ENCODE measurements at regions of chr11 and their contacts with region 1.

Region 1: DNA sequence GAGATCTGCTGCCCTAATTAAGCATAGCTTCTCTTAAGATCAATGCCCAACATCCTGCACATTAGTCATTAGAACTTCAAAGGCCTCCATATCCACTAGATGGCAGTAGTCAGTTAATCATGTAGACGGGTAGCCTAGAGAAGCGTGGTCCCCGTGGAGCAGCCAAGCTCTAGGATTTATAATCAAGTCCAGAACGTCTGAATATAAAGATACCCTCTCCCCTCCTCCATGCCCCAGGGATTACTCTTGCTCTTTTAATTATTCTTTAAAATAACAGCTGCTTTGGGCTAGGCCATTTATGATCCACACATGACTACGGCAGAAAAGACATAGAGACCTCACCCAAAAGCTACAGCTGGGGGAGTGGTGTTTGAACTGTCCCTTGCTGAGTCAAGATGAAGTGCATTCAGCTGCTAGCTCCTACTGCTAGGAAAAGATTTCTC is 327.6 kb upstream of the PLET1 start:
- DNase-seq: peak; percentile 61 to 94
- H3K4me3 ChIP-seq: no peak overlapping the region
- H3K27ac ChIP-seq: peak overlapping the region in 2 of 5 donors; percentile 34 to 67
- H3K4me1 ChIP-seq: peaks cover 0 to 23% (median 9%) of the 10 kb centered on the region in 4 donors
- H3K27me3 ChIP-seq: no peaks in the 10 kb centered on the region
- CTCF ChIP-seq: peak in 5 of 7 experiments; percentile 27 to 65 (median 61)
- EP300 ChIP-seq: no peak
- POLR2A ChIP-seq: no peak

Region 2: GRCh38 chr11:112401036-112401769 is 187.1 kb before region 1 on chr11:
- intact Hi-C with region 1: no loop called
- DNase-seq: no peak
- H3K4me3 ChIP-seq: no peak overlapping the region
- H3K27ac ChIP-seq: no peak overlapping the region
- H3K4me1 ChIP-seq: no peaks in the 10 kb centered on the region
- H3K27me3 ChIP-seq: no peaks in the 10 kb centered on the region
- CTCF ChIP-seq: no peak
- EP300 ChIP-seq: no peak
- POLR2A ChIP-seq: no peak

Region 3: GRCh38 chr11:112724496-112724790 is 136.2 kb after region 1 on chr11:
- intact Hi-C with region 1: no loop called
- DNase-seq: peak in 1 of 2 donors; percentile 32
- H3K4me3 ChIP-seq: no peak overlapping the region
- H3K27ac ChIP-seq: no peak overlapping the region
- H3K4me1 ChIP-seq: no peaks in the 10 kb centered on the region
- H3K27me3 ChIP-seq: peaks cover 0 to 14% (median 0%) of the 10 kb centered on the region in 3 donors
- CTCF ChIP-seq: no peak
- EP300 ChIP-seq: no peak
- POLR2A ChIP-seq: no peak

Region 4: GRCh38 chr11:112886434-112887373 is 298.4 kb after region 1 on chr11:
- intact Hi-C with region 1: no loop called
- DNase-seq: peak in 1 of 2 donors; percentile 37
- H3K4me3 ChIP-seq: no peak overlapping the region
- H3K27ac ChIP-seq: no peak overlapping the region
- H3K4me1 ChIP-seq: peaks cover 0 to 16% (median 14%) of the 10 kb centered on the region in 4 donors
- H3K27me3 ChIP-seq: no peaks in the 10 kb centered on the region
- CTCF ChIP-seq: no peak
- EP300 ChIP-seq: no peak
- POLR2A ChIP-seq: no peak

Region 5: GRCh38 chr11:113106507-113106906 is 518.2 kb after region 1 on chr11:
- intact Hi-C with region 1: no loop called
- DNase-seq: no peak
- H3K4me3 ChIP-seq: no peak overlapping the region
- H3K27ac ChIP-seq: no peak overlapping the region
- H3K4me1 ChIP-seq: peaks cover 0 to 26% (median 13%) of the 10 kb centered on the region in 4 donors
- H3K27me3 ChIP-seq: no peaks in the 10 kb centered on the region
- CTCF ChIP-seq: no peak
- EP300 ChIP-seq: no peak
- POLR2A ChIP-seq: no peak

Region 6: DNA sequence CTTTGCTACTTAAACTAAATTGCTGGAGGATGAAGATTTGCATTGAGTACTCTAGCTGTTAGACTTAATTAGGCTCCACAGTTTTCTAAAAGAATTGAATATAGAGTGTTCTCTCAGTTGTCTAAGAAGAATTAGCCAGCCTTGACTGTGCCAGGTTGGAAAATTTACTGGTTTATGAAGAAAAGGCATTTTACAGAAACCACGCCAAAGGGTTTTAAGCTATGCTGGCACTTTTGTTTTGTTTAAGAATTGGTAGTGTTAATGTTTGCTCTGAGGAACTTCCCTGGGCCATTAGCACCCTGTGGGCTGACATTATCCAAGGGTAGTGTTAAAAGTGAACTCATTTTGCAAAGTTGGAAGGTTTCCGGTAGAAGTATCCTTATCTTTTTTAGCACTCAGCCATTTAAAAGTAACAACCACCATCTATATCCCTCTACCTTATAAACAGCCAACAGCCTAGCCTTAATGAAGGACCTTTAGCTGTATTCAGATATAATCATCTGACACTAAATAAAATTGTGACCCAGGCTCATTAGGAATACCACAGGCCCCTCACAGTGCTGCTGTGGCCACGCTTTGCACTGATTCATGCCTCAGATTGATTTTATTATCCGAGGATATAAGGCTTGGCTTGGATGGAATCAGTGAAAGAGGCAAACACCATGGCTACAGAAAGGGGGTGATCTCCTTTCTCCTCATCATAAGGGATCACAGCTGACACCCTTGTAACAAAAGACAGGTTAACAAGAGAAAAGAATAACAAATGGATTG is 531.9 kb after region 1 on chr11:
- intact Hi-C with region 1: loop called (anchors 5 kb)
- DNase-seq: no peak
- H3K4me3 ChIP-seq: no peak overlapping the region
- H3K27ac ChIP-seq: no peak overlapping the region
- H3K4me1 ChIP-seq: peaks cover 0 to 7% (median 2%) of the 10 kb centered on the region in 4 donors
- H3K27me3 ChIP-seq: no peaks in the 10 kb centered on the region
- CTCF ChIP-seq: no peak
- EP300 ChIP-seq: no peak
- POLR2A ChIP-seq: no peak

Region 7: GRCh38 chr11:113289431-113290187 is 701.3 kb after region 1 on chr11:
- intact Hi-C with region 1: loop called (anchors 5 kb)
- DNase-seq: peak; percentile 67 to 85
- H3K4me3 ChIP-seq: no peak overlapping the region
- H3K27ac ChIP-seq: no peak overlapping the region
- H3K4me1 ChIP-seq: peaks cover 0 to 17% (median 3%) of the 10 kb centered on the region in 4 donors
- H3K27me3 ChIP-seq: peaks cover 0 to 11% (median 4%) of the 10 kb centered on the region in 3 donors
- CTCF ChIP-seq: peak in 5 of 7 experiments; percentile 75 to 88 (median 82)
- EP300 ChIP-seq: no peak
- POLR2A ChIP-seq: no peak